Activated CD4-positive, alpha-beta T cell treated with anti-CD3 and anti-CD28 coated beads for 36 hours (primary cell): ENCODE measurements at regions of chr19 and their contacts with region 1.

Region 1: DNA sequence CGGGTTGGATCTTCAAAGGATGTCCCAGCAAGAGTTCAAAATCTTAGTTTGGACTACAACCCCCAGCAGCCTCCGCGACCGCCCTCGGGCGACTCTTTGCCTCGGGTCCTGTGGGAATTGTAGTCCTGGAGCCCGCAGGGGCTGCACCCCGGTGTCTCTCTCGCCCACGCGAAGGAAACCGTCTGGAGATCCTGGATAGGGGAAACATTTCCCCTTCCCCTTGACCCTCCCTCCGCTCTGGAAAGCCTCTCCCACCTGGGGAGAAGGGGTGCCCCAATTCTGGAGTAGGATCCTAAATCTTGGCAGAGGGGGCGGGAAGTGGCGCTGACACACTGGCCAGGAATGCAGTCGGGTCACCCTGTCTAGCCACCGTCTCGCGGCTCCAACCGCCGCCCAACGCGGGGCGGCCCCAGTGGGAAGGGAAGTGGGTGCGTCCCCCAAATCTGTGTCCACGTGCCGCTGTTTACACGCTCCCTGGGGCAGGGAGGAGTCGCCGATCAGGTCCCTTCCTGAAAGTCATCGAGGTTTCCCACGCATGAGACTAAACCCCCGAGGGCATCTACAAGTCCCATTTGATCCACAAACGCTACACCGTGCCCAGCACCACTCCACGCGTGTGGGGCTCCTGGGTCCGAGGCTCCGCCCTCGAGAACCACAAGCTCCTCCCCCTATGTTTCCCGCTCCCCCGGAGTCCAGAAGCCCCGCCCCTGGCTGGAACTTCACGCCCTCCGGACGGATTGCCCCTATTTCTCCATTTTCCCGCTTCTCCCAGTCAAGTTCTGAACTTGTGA is 761 bp upstream of the PPP1R13L start:
- DNase-seq: peak; percentile 91
- ATAC-seq: peak; percentile 59
- H3K4me3 Mint-ChIP-seq: peak overlapping the region; percentile 95
- H3K27ac Mint-ChIP-seq: peak overlapping the region; percentile 97
- H3K4me1 Mint-ChIP-seq: peaks cover 34% of the 10 kb centered on the region
- H3K27me3 Mint-ChIP-seq: peaks cover 23% of the 10 kb centered on the region

Region 2: GRCh38 chr19:45001087-45001739 is 404.4 kb before region 1 on chr19 and contains the start of gene RELB:
- CTCF ChIA-PET with region 1: no interaction called
- POLR2A ChIA-PET with region 1: no interaction called
- intact Hi-C with region 1: loop called in 1 of 2 experiments (anchors 1 kb)
- DNase-seq: peak; percentile 97
- ATAC-seq: peak; percentile 53
- H3K4me3 Mint-ChIP-seq: peak within 1 kb of the TSS; percentile 94
- H3K27ac Mint-ChIP-seq: peak within 1 kb of the TSS; percentile 97
- H3K4me1 Mint-ChIP-seq: peaks cover 16% of the 10 kb centered on the region
- H3K27me3 Mint-ChIP-seq: no peaks in the 10 kb centered on the region
- total RNA-seq, gene RELB: 43.8 to 51.2 TPM

Region 3: GRCh38 chr19:45258862-45259261 is 146.8 kb before region 1 on chr19:
- CTCF ChIA-PET with region 1: no interaction called
- POLR2A ChIA-PET with region 1: no interaction called
- intact Hi-C with region 1: no loop called
- DNase-seq: no peak
- ATAC-seq: no peak
- H3K4me3 Mint-ChIP-seq: no peak overlapping the region
- H3K27ac Mint-ChIP-seq: no peak overlapping the region
- H3K4me1 Mint-ChIP-seq: peaks cover 7% of the 10 kb centered on the region
- H3K27me3 Mint-ChIP-seq: no peaks in the 10 kb centered on the region

Region 4: GRCh38 chr19:45294291-45295029 is 111.2 kb before region 1 on chr19:
- CTCF ChIA-PET with region 1: no interaction called
- POLR2A ChIA-PET with region 1: no interaction called
- intact Hi-C with region 1: no loop called
- DNase-seq: no peak
- ATAC-seq: no peak
- H3K4me3 Mint-ChIP-seq: no peak overlapping the region
- H3K27ac Mint-ChIP-seq: no peak overlapping the region
- H3K4me1 Mint-ChIP-seq: peaks cover 8% of the 10 kb centered on the region
- H3K27me3 Mint-ChIP-seq: no peaks in the 10 kb centered on the region

Region 5: GRCh38 chr19:45352914-45353796 is 52.5 kb before region 1 on chr19:
- CTCF ChIA-PET with region 1: no interaction called
- POLR2A ChIA-PET with region 1: no interaction called
- intact Hi-C with region 1: no loop called
- DNase-seq: no peak
- ATAC-seq: peak; percentile 30
- H3K4me3 Mint-ChIP-seq: no peak overlapping the region
- H3K27ac Mint-ChIP-seq: no peak overlapping the region
- H3K4me1 Mint-ChIP-seq: no peaks in the 10 kb centered on the region
- H3K27me3 Mint-ChIP-seq: no peaks in the 10 kb centered on the region

Region 6: DNA sequence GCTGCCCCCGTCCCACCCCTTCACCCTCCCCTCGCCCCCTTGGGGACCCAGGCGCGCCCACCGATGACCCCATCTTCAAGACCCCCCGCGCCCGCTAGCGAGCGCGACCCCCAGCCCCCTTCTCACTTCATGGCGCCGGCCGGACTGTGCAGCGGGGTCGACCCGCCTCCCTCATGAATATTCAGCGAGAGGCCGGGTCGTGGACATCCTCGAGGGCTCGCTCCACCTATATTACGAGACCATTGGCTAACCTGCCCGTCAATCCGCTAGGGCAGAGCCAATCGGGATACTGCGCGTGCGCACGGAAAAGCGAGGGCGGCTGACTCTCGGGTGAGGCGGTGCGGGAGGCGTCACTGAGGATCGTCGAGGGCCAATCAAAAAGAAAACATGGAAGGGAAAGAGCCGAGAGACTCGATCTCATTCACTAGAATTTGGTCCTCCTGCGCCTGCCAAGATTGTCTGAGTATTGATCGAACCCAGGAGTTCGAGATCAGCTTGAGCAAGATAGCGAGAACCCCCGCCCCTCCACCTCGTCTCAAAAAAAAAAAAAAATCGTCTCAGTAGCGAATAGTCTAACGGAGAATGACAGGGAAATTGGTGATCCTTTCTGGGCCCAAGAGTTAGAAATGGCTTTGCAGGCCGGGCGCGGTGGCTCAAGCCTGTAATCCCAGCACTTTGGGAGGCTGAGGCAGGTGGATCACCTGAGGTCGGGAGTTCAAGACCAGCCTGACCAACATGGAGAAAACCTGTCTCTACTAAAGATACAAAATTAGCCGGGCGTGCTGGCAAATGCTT is 35.0 kb before region 1 on chr19 and contains the start of gene ERCC2:
- CTCF ChIA-PET with region 1: interaction called, 5 read pairs
- POLR2A ChIA-PET with region 1: interaction called, 3 read pairs
- intact Hi-C with region 1: loop called in 1 of 2 experiments (anchors 1 kb)
- DNase-seq: peak; percentile 100
- ATAC-seq: peak; percentile 100
- H3K4me3 Mint-ChIP-seq: peak within 1 kb of the TSS; percentile 79
- H3K27ac Mint-ChIP-seq: peak within 1 kb of the TSS; percentile 97
- H3K4me1 Mint-ChIP-seq: peaks cover 8% of the 10 kb centered on the region
- H3K27me3 Mint-ChIP-seq: no peaks in the 10 kb centered on the region
- total RNA-seq, gene ERCC2: 27.5 to 30.4 TPM

Region 7: DNA sequence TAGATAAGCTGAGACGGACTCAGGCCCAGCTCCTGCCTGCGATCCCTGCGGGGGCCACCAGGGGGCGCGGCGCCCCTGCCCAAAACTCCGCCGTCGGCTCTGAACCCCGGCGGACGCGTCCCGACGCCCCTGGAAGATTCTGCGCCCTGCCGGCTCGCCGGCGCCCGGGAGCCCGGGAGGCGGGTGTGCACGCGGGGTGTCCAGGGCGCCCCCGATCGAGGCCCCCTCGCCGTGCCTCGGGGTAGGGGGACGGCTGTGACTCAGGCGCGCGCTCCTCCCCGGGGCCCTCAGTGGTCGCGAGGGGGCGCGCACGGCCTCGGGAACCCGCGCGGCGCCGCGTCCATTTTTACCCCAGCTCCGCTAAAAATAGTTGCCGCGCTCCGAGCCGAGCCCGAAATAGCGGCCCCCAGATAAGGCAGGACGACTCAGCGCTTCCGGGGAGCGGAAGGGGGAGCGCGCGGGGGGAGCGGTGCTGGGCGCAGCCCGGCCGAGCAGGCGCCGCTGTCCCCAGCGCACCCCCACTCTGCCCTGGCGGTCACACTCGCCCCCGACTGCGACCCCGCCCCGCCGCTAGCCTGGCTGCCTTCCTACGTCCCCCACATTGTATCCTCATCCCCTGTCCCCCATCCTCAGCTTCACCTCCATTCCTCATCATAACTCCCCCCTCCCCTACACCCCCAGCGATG is 34.1 kb after region 1 on chr19:
- CTCF ChIA-PET with region 1: no interaction called
- POLR2A ChIA-PET with region 1: no interaction called
- intact Hi-C with region 1: loop called (anchors 1 to 2 kb)
- DNase-seq: peak; percentile 90
- ATAC-seq: peak; percentile 70
- H3K4me3 Mint-ChIP-seq: peak overlapping the region; percentile 56
- H3K27ac Mint-ChIP-seq: peak overlapping the region; percentile 63
- H3K4me1 Mint-ChIP-seq: peaks cover 33% of the 10 kb centered on the region
- H3K27me3 Mint-ChIP-seq: no peaks in the 10 kb centered on the region

Region 8: DNA sequence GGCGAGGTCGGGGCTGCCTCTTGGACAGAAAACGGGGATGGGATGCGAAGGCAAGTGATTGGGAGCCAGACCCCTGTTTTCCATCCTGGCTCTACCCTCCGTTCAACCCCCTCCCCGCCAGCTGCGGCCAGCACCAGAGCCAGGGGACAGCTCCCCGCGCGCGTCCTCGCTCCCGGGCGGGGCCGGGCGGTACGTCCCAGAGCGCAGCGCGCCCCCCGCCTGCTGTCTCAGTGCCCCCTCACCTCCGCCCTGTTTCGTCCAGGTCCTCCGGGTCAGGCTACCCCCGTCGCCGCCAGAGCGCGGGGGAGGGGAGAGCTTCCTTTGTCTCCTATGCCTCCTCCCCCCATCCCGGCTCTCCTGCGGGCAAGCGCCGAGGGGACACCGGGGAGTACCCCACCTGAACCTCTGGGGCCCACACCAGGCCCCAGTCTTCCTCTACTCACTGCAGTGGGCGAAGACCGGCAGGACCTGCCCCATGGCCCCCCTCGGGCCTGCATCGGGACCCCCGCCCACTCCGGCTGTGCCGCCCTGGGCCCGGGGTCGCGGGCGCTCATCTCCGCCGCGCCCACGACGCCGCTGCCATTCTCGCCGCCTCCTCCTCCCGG is 90.8 kb after region 1 on chr19:
- CTCF ChIA-PET with region 1: no interaction called
- POLR2A ChIA-PET with region 1: no interaction called
- intact Hi-C with region 1: loop called in 1 of 2 experiments (anchors 1 kb)
- DNase-seq: peak; percentile 74
- ATAC-seq: peak; percentile 1
- H3K4me3 Mint-ChIP-seq: peak overlapping the region; percentile 6
- H3K27ac Mint-ChIP-seq: no peak overlapping the region
- H3K4me1 Mint-ChIP-seq: peaks cover 43% of the 10 kb centered on the region
- H3K27me3 Mint-ChIP-seq: peaks cover 31% of the 10 kb centered on the region

Region 9: DNA sequence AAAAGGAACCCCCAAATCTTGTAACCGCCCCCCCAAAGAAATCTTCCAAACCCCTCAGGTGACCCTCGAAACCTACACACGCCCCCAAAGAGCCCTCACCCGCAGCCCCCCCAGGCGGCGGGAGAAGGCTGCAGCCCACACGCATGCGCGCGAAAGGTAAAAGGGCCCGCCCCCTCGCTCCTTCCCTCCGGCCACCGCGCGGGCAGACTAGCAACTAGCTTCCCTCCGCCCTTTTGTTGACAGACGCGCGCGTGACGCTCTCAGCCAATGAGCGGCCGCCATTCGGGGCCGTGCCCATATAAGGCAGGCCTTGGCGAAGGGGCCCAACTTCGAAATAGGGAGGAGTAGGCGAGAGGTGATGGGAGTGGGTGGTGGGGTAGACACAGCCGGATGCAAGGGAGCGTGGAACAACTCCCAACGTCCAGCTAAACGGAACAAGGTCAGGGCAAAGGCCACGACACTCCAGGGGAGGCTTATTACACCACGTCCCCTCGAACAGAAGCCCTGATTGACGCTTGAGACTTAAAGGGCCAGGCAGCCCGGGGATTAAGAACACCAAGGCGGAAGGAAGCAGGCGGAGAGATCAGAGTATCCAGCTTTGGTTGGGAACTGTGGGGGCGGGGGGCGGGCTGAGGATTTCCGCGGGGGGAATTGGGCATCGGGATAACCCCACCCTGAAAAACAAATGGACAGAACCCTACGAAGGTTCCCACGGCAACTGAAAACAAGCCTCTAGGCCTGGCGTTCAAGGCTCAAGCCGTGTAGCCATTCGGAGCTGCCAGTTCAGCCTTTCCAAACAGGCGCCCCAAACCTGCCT is 311.7 kb after region 1 on chr19:
- CTCF ChIA-PET with region 1: no interaction called
- POLR2A ChIA-PET with region 1: no interaction called
- intact Hi-C with region 1: loop called in 1 of 2 experiments (anchors 1 kb)
- DNase-seq: peak; percentile 99
- ATAC-seq: peak; percentile 97
- H3K4me3 Mint-ChIP-seq: peak overlapping the region; percentile 93
- H3K27ac Mint-ChIP-seq: peak overlapping the region; percentile 94
- H3K4me1 Mint-ChIP-seq: peaks cover 40% of the 10 kb centered on the region
- H3K27me3 Mint-ChIP-seq: no peaks in the 10 kb centered on the region